Vagina (tissue), 2 donors: ENCODE measurements at regions of chr6 and their contacts with region 1.

Region 1: GRCh38 chr6:106568530-106568929 is 60.8 kb downstream of the RTN4IP1 start:
- DNase-seq: no peak
- H3K4me3 ChIP-seq: no peak overlapping the region
- H3K27ac ChIP-seq: no peak overlapping the region
- H3K4me1 ChIP-seq: no peaks in the 10 kb centered on the region
- H3K27me3 ChIP-seq: no peaks in the 10 kb centered on the region
- CTCF ChIP-seq: no peak
- POLR2A ChIP-seq: no peak

Region 2: DNA sequence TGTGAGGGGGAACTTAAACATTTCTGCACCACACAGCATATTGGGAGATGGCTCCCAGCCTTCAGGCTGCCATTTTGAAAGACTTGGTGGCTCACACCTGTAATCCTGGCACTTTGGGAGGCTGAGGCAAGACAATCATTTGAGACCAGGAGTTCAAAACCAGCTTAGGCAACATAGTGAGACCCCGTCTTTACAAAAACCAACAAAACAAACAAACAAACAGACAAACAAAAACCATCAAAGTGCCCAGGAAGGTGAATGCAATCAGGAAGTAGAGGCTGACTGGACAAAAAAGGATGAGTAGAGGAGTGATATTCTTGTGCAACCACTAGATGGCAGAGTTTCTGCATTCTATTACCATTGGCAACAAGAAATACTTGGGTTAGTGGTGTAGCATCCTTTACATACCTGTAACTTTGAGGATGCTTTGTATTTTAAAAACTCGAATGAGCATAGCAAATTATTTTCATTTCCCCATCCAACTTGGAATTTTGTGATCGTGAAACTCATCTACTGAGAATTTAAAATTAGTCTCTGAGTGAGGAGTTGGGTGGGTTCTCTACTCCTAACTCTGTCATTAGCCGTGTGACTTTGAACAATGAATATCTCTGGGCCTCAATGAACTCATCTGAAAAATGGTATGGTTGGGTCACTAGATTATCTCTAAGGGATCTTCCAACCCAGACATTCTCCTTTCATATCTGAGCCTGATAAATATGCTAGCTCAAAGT is 123.6 kb before region 1 on chr6:
- intact Hi-C with region 1: loop called (anchors 5 kb)
- DNase-seq: no peak
- H3K4me3 ChIP-seq: no peak overlapping the region
- H3K27ac ChIP-seq: no peak overlapping the region
- H3K4me1 ChIP-seq: no peaks in the 10 kb centered on the region
- H3K27me3 ChIP-seq: no peaks in the 10 kb centered on the region
- CTCF ChIP-seq: peak; percentile 57 to 79 (median 73)
- POLR2A ChIP-seq: no peak

Region 3: GRCh38 chr6:106461084-106461483 is 107.4 kb before region 1 on chr6:
- intact Hi-C with region 1: no loop called
- DNase-seq: no peak
- H3K4me3 ChIP-seq: no peak overlapping the region
- H3K27ac ChIP-seq: no peak overlapping the region
- H3K4me1 ChIP-seq: no peaks in the 10 kb centered on the region
- H3K27me3 ChIP-seq: no peaks in the 10 kb centered on the region
- CTCF ChIP-seq: no peak
- POLR2A ChIP-seq: no peak